A549 (cell line): ENCODE measurements at regions of chr12 and their contacts with region 1.

Region 1: GRCh38 chr12:6570264-6570887 is 2.3 kb upstream of the NOP2 start:
- DNase-seq: peak; percentile 72 to 80
- ATAC-seq: peak; percentile 49 to 65; a peak in 4 of 6 replicates
- H3K4me3 ChIP-seq: no peak overlapping the region
- H3K27ac ChIP-seq: no peak overlapping the region
- H3K4me1 ChIP-seq: peaks cover 23% of the 10 kb centered on the region
- CTCF ChIP-seq: peak; percentile 61
- EP300 ChIP-seq: no peak
- POLR2A ChIP-seq: no peak
- RAD21 ChIP-seq: peak; percentile 49 to 51

Region 2: GRCh38 chr12:6507102-6507998 is 63.0 kb before region 1 on chr12:
- CTCF ChIA-PET with region 1: no interaction called
- POLR2A ChIA-PET with region 1: no interaction called
- DNase-seq: no peak
- ATAC-seq: no peak
- H3K4me3 ChIP-seq: no peak overlapping the region
- H3K27ac ChIP-seq: peak overlapping the region; percentile 25 to 55; a peak in 4 of 6 replicates
- H3K4me1 ChIP-seq: no peaks in the 10 kb centered on the region
- CTCF ChIP-seq: no peak
- EP300 ChIP-seq: no peak
- POLR2A ChIP-seq: no peak
- RAD21 ChIP-seq: no peak

Region 3: DNA sequence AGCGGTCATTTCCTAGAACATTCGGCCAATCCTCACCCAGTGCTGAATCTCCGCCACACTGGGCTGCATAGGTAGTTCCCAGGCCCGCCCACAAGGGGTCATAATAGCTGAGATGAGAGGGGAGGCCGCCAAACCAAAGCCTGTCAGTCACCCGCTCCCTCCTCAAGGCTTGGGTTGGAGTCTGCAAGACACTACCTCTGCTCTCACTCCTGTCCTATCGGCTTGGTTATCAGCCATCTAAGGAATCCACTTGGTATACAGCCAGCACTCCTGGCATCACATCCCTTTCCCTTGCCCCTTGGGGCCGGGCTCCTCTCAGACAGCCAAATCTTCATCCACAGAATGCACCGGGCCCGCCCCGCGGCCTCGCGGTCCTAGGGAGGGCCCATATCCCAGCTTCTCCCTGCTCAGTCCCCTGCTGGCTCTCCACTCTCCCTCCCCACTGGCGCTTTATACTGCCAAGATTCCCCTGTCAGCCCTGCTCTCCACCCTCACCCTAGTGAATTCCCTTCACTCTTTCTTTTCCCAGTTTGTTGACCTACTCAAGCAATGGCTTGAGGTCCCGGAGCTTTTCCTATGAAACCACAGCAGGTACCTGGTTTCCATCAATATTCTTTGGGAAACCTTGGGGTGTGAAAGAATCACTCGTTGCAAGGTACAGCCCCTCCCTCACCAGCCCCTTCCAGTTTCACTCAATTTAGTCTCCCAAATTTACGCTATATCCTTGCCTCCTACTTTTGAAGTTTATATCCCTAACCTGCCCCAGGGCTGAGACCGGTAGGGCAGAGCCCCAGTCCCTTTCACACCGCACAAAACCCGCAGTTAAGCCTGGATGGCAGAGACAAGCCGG is 16.0 kb before region 1 on chr12:
- CTCF ChIA-PET with region 1: interaction called, 491 read pairs
- POLR2A ChIA-PET with region 1: interaction called, 5 read pairs
- DNase-seq: peak; percentile 82 to 83
- ATAC-seq: peak; percentile 81 to 86
- H3K4me3 ChIP-seq: no peak overlapping the region
- H3K27ac ChIP-seq: no peak overlapping the region
- H3K4me1 ChIP-seq: peaks cover 19% of the 10 kb centered on the region
- CTCF ChIP-seq: peak; percentile 50
- EP300 ChIP-seq: no peak
- POLR2A ChIP-seq: no peak
- RAD21 ChIP-seq: peak; percentile 28 to 47; a peak in 3 of 5 replicates

Region 4: DNA sequence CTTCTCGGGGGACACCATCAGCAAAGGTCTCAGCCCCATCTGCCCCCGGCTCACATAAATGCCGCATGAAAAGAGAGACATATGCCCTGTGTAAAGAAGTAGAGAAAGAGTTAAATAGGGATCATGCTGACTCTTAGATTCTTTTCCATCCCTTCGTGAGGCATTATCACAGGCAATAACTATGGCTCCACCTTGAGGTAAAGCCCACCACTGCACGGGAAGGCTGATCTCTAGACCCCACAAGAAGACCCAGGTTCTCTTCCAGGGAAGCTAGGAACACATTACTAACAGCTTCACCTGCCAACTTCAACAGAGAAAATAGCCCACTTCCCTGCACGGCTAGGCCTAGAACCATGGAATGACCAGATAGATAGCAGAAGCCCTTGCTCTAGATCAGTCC is 11.8 kb after region 1 on chr12:
- CTCF ChIA-PET with region 1: interaction called, 49 read pairs
- POLR2A ChIA-PET with region 1: interaction called, 9 read pairs
- DNase-seq: peak in 1 of 2 experiments; percentile 25
- ATAC-seq: peak; percentile 80 to 81
- H3K4me3 ChIP-seq: no peak overlapping the region
- H3K27ac ChIP-seq: no peak overlapping the region
- H3K4me1 ChIP-seq: no peaks in the 10 kb centered on the region
- CTCF ChIP-seq: peak; percentile 28; the same call in 2 of the 3 replicates
- EP300 ChIP-seq: no peak
- POLR2A ChIP-seq: no peak
- RAD21 ChIP-seq: peak; percentile 16 to 29; a peak in 1 of 5 replicates

Region 5: DNA sequence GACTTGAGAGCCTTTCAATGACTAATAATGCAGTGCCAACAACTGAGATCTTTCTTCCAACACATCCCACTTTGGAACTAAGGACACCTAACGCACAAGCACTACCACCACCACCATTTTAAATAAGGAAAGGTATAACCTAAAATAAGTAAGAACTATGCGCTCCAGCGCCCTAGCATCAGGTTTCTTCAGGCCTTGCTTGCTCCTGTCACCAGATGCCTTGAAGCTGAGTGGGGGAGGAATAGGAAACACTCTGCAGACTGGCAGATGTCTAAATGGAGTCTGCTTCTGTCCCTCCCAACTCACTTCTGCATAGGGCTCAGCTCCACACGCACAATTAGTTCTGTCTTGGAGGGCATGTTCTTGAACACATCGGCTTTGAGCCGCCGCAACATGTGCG is 21.7 kb after region 1 on chr12:
- CTCF ChIA-PET with region 1: interaction called, 49 read pairs
- POLR2A ChIA-PET with region 1: no interaction called
- DNase-seq: no peak
- ATAC-seq: no peak
- H3K4me3 ChIP-seq: no peak overlapping the region
- H3K27ac ChIP-seq: no peak overlapping the region
- H3K4me1 ChIP-seq: no peaks in the 10 kb centered on the region
- CTCF ChIP-seq: no peak
- EP300 ChIP-seq: no peak
- POLR2A ChIP-seq: no peak
- RAD21 ChIP-seq: no peak